Caco-2 (cell line): ENCODE measurements at regions of chr6 and their contacts with region 1.

Region 1: DNA sequence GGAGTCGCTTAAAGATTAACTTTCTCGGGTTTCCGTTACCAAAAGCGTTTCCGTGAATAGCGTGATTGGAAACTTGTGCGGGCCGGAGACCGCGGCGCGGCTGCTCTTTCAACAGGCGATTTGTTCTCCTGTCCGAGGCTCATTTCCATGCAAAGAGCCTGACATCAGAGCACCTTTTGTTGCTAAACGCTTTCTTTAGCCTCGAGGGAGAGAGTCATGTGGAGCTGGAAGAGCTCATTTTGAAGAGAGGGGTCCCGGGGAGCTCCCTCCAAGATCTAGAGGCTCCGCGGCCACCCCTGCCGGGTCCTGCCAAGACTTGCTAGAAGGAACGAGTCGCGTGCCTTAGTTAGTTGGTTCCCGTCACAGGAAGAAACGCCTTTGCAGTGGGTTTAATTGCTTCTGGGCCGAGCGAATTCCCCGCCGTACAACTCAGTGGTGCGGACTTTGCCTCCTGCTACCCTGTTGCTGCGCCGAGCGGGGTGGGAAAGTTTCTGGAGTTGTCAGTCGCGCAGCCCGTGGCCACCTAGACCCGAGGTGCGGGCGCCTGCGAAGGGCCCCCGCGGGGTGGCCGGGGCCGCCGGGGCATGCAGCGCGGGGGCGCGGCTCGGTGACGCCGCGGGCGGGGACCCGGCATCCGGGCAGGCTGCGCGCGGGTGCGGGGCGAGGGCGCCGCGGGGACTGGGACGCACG is at the start of gene SASH1:
- DNase-seq: peak; percentile 82 to 84
- H3K4me3 ChIP-seq: peak within 1 kb of the TSS; percentile 84
- H3K4me3 Mint-ChIP-seq: peak within 1 kb of the TSS; percentile 84
- H3K27ac Mint-ChIP-seq: peak within 1 kb of the TSS; percentile 98
- H3K4me1 ChIP-seq: peaks cover 20% of the 10 kb centered on the region
- H3K4me1 Mint-ChIP-seq: peaks cover 19% of the 10 kb centered on the region
- H3K27me3 ChIP-seq: no peaks in the 10 kb centered on the region
- H3K27me3 Mint-ChIP-seq: no peaks in the 10 kb centered on the region
- CTCF ChIP-seq: no peak
- total RNA-seq, gene SASH1: 41.7 and 42.0 TPM in 2 replicates

Region 2: GRCh38 chr6:148177589-148178233 is 164.8 kb before region 1 on chr6:
- CTCF ChIA-PET with region 1: interaction called, 4 read pairs
- POLR2A ChIA-PET with region 1: no interaction called
- intact Hi-C with region 1: loop called (anchors 5 kb)
- DNase-seq: peak; percentile 45 to 69
- H3K4me3 ChIP-seq: no peak overlapping the region
- H3K4me3 Mint-ChIP-seq: no peak overlapping the region
- H3K27ac Mint-ChIP-seq: no peak overlapping the region
- H3K4me1 ChIP-seq: no peaks in the 10 kb centered on the region
- H3K4me1 Mint-ChIP-seq: no peaks in the 10 kb centered on the region
- H3K27me3 ChIP-seq: no peaks in the 10 kb centered on the region
- H3K27me3 Mint-ChIP-seq: no peaks in the 10 kb centered on the region
- CTCF ChIP-seq: peak; percentile 64 to 78

Region 3: DNA sequence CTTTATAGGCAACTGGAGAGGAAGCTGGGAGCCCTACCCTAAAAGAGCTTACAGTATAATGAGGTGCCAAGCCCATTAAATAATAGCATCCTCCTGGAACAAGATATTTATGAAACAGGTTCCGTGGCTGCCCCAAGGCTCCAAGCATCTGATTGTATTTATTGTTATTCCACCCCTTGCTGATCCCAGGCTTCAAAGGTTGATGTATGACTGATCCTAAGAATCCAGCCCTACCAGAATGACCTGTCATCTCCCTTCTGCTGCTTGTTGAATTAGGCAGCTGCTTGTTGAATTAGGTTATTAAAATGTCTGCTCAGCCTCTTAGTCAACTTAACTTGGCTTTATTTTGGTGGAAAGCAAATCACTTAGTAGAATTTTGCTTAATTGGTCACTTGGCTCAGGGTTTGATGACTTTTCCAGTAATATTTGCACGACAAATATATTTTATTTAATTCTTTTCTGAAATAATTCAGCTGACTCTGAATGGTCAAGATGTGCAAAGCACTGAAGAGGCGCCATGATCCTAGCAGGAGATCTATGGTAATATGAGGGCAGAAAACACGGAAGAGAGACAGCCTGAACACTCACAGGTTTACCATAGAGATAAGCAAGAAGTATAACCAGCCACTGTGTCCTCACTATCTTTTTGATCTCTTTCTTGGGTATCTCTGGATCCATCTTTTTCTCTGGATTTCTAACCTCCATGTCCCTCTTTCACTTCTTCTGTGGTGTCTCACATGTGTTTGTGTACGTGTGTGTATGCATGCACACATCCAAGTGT is 34.9 kb before region 1 on chr6:
- CTCF ChIA-PET with region 1: no interaction called
- POLR2A ChIA-PET with region 1: no interaction called
- intact Hi-C with region 1: loop called (anchors 1 kb)
- DNase-seq: peak; percentile 58 to 74
- H3K4me3 ChIP-seq: no peak overlapping the region
- H3K4me3 Mint-ChIP-seq: no peak overlapping the region
- H3K27ac Mint-ChIP-seq: peak overlapping the region; percentile 86
- H3K4me1 ChIP-seq: peaks cover 27% of the 10 kb centered on the region
- H3K4me1 Mint-ChIP-seq: peaks cover 25% of the 10 kb centered on the region
- H3K27me3 ChIP-seq: no peaks in the 10 kb centered on the region
- H3K27me3 Mint-ChIP-seq: no peaks in the 10 kb centered on the region
- CTCF ChIP-seq: no peak

Region 4: GRCh38 chr6:148329596-148330381 is 12.7 kb before region 1 on chr6:
- CTCF ChIA-PET with region 1: no interaction called
- POLR2A ChIA-PET with region 1: no interaction called
- intact Hi-C with region 1: no loop called
- DNase-seq: no peak
- H3K4me3 ChIP-seq: no peak overlapping the region
- H3K4me3 Mint-ChIP-seq: no peak overlapping the region
- H3K27ac Mint-ChIP-seq: no peak overlapping the region
- H3K4me1 ChIP-seq: no peaks in the 10 kb centered on the region
- H3K4me1 Mint-ChIP-seq: peaks cover 5% of the 10 kb centered on the region
- H3K27me3 ChIP-seq: no peaks in the 10 kb centered on the region
- H3K27me3 Mint-ChIP-seq: no peaks in the 10 kb centered on the region
- CTCF ChIP-seq: no peak

Region 5: GRCh38 chr6:148395583-148396101 is 53.1 kb after region 1 on chr6:
- CTCF ChIA-PET with region 1: no interaction called
- POLR2A ChIA-PET with region 1: no interaction called
- intact Hi-C with region 1: no loop called
- DNase-seq: no peak
- H3K4me3 ChIP-seq: no peak overlapping the region
- H3K4me3 Mint-ChIP-seq: no peak overlapping the region
- H3K27ac Mint-ChIP-seq: no peak overlapping the region
- H3K4me1 ChIP-seq: 0 out of 2 replicates have a peak, but pooled peaks cover 7% of the 10 kb centered on the region
- H3K4me1 Mint-ChIP-seq: no peaks in the 10 kb centered on the region
- H3K27me3 ChIP-seq: no peaks in the 10 kb centered on the region
- H3K27me3 Mint-ChIP-seq: no peaks in the 10 kb centered on the region
- CTCF ChIP-seq: no peak

Region 6: GRCh38 chr6:148426317-148426977 is 83.9 kb after region 1 on chr6:
- CTCF ChIA-PET with region 1: no interaction called
- POLR2A ChIA-PET with region 1: interaction called, 17 read pairs
- intact Hi-C with region 1: no loop called
- DNase-seq: no peak
- H3K4me3 ChIP-seq: no peak overlapping the region
- H3K4me3 Mint-ChIP-seq: no peak overlapping the region
- H3K27ac Mint-ChIP-seq: peak overlapping the region; percentile 66
- H3K4me1 ChIP-seq: peaks cover 30% of the 10 kb centered on the region
- H3K4me1 Mint-ChIP-seq: peaks cover 23% of the 10 kb centered on the region
- H3K27me3 ChIP-seq: no peaks in the 10 kb centered on the region
- H3K27me3 Mint-ChIP-seq: no peaks in the 10 kb centered on the region
- CTCF ChIP-seq: no peak

Region 7: DNA sequence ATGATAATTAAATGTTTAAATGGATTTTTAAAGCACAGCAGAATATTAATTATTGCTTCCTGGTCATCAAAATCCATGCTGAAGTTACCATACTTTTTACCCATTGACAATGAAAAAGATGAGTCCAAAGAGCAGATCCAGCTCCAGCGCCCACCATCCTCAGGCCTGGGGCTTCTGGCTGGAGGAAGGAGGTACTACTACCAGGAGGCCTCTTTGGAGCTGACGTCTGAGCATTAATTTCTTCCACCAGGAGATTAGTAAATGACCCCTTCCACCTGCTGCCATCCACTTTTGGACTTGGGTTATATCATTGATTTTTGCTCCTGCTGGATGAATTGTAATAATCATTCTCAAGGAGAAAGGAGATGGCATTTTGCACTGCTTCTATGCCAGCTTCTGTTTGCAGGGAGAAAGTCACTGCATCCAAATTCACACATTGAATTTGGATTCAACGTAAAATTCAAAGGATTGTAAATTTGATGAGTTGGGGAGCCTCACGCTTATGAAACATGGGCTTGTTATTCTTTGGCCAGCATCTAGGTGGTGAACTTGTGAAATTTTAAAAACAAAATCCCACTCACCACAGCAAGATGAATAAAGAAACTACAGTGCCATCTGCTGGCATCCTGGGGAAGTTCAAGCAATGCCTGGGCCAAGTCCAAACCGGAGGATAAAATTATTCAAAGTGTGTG is 122.0 kb after region 1 on chr6:
- CTCF ChIA-PET with region 1: interaction called, 6 read pairs
- POLR2A ChIA-PET with region 1: no interaction called
- intact Hi-C with region 1: loop called (anchors 2 kb)
- DNase-seq: peak; percentile 58 to 77
- H3K4me3 ChIP-seq: no peak overlapping the region
- H3K4me3 Mint-ChIP-seq: no peak overlapping the region
- H3K27ac Mint-ChIP-seq: peak overlapping the region; percentile 74
- H3K4me1 ChIP-seq: peaks cover 12% of the 10 kb centered on the region
- H3K4me1 Mint-ChIP-seq: peaks cover 13% of the 10 kb centered on the region
- H3K27me3 ChIP-seq: no peaks in the 10 kb centered on the region
- H3K27me3 Mint-ChIP-seq: no peaks in the 10 kb centered on the region
- CTCF ChIP-seq: peak; percentile 87 to 89